ENCODE measurements at regions of chr5 and their contacts with region 1.

Region 1: DNA sequence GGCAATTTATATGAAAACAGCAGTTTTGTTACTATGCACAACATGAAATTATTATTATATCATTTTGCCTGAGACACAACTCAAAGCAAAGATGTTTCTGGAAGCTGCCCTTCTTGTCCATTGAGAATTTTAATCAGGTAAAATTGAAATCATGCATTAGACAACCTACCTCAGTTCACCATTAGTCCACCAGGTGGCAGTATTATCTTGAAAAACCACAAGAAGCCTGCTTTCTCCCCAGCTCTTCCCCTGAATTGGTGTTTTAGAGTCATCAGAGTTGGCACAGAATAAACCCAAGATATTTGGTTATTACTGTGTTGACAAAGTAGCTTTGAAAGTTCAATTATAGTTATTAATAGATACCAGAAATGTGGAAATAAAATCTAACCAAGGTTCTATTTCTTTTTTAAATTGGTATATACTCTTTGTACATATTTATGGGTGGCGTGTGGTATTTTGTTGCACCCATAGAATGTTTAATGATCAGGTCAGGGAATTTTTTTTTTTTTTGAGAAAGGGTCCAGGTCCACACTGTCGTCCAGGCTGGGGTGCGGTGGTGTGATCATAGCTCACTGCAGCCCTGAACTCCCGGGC is 25.7 kb downstream of the UTP15 start:
- DNase-seq: peak; percentile 45 to 69
- H3K4me3 ChIP-seq: no peak overlapping the region
- H3K4me3 Mint-ChIP-seq: no peak overlapping the region
- H3K27ac Mint-ChIP-seq: no peak overlapping the region
- H3K4me1 ChIP-seq: no peaks in the 10 kb centered on the region
- H3K4me1 Mint-ChIP-seq: no peaks in the 10 kb centered on the region
- H3K27me3 ChIP-seq: no peaks in the 10 kb centered on the region
- H3K27me3 Mint-ChIP-seq: no peaks in the 10 kb centered on the region
- CTCF ChIP-seq: peak; percentile 65 to 82

Region 2: GRCh38 chr5:73565969-73566547 is 25.1 kb before region 1 on chr5:
- CTCF ChIA-PET with region 1: no interaction called
- POLR2A ChIA-PET with region 1: no interaction called
- intact Hi-C with region 1: no loop called
- DNase-seq: no peak
- H3K4me3 ChIP-seq: peak overlapping the region; percentile 61
- H3K4me3 Mint-ChIP-seq: peak overlapping the region; percentile 84
- H3K27ac Mint-ChIP-seq: peak overlapping the region; percentile 90
- H3K4me1 ChIP-seq: peaks cover 9% of the 10 kb centered on the region; the same call in 1 of the 2 replicates
- H3K4me1 Mint-ChIP-seq: peaks cover 12% of the 10 kb centered on the region
- H3K27me3 ChIP-seq: no peaks in the 10 kb centered on the region
- H3K27me3 Mint-ChIP-seq: no peaks in the 10 kb centered on the region
- CTCF ChIP-seq: no peak

Region 3: GRCh38 chr5:73633060-73633459 is 41.9 kb after region 1 on chr5:
- CTCF ChIA-PET with region 1: interaction called, 5 read pairs
- POLR2A ChIA-PET with region 1: no interaction called
- intact Hi-C with region 1: loop called (anchors 2 kb)
- DNase-seq: no peak
- H3K4me3 ChIP-seq: no peak overlapping the region
- H3K4me3 Mint-ChIP-seq: no peak overlapping the region
- H3K27ac Mint-ChIP-seq: no peak overlapping the region
- H3K4me1 ChIP-seq: peaks cover 5% of the 10 kb centered on the region; the same call in 1 of the 2 replicates
- H3K4me1 Mint-ChIP-seq: no peaks in the 10 kb centered on the region
- H3K27me3 ChIP-seq: no peaks in the 10 kb centered on the region; the same call in 1 of the 2 replicates
- H3K27me3 Mint-ChIP-seq: peaks cover 5% of the 10 kb centered on the region
- CTCF ChIP-seq: no peak

Region 4: DNA sequence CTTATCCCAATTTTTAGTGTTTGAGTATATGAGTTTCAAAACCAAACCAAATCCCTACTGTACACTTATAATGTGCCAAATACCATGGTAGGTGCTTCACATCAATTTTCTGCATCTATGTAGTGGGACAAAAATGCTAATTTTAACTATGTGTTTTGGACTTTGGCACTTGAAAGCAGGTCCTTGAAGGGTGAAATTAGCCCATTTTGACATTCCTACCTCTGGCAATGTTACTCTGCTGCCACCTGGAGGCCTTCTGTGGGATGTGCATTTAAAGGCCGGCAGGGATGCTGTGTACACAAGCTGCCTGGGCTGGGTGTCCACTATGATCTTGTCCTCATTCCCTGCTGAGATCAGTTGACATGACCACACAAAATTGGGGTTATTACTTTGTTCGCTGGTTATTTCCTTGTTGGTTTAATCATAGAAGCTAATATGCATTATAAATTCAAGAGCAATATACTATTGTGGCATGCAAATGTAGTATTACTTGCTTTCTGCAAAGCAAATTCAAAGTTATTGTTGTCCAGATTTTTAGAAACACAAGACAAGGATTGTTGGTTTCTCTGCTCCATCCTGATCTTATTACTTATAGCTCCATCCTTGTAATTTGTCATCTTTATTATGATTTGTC is 201.6 kb after region 1 on chr5:
- CTCF ChIA-PET with region 1: interaction called, 27 read pairs
- POLR2A ChIA-PET with region 1: no interaction called
- intact Hi-C with region 1: loop called (anchors 1 kb)
- DNase-seq: peak; percentile 76 to 81
- H3K4me3 ChIP-seq: no peak overlapping the region
- H3K4me3 Mint-ChIP-seq: no peak overlapping the region
- H3K27ac Mint-ChIP-seq: no peak overlapping the region
- H3K4me1 ChIP-seq: peaks cover 9% of the 10 kb centered on the region
- H3K4me1 Mint-ChIP-seq: peaks cover 13% of the 10 kb centered on the region
- H3K27me3 ChIP-seq: no peaks in the 10 kb centered on the region
- H3K27me3 Mint-ChIP-seq: no peaks in the 10 kb centered on the region
- CTCF ChIP-seq: peak; percentile 93 to 96

Measured in Caco-2 (cell line).